HepG2 (cell line): ENCODE measurements at regions of chr11 and their contacts with region 1.

Region 1: GRCh38 chr11:6481012-6481923 is at the starts of genes ARFIP2 and TIMM10B:
- DNase-seq: peak; percentile 96
- ATAC-seq: peak; percentile 96
- H3K4me3 ChIP-seq: peak within 1 kb of the TSS; percentile 86 to 92 (median 86)
- H3K27ac ChIP-seq: peak within 1 kb of the TSS; percentile 95
- H3K4me1 ChIP-seq: peaks cover 56% of the 10 kb centered on the region
- H3K27me3 ChIP-seq: no peaks in the 10 kb centered on the region; a peak in 1 of 5 replicates
- CTCF ChIP-seq: no peak; the same call in 1 of the 2 replicates
- EP300 ChIP-seq: peak in 1 of 2 experiments; percentile 43; a peak in 1 of 4 replicates
- POLR2A ChIP-seq: peak; percentile 94 to 98
- RAD21 ChIP-seq: 0 out of 2 replicates have a peak, but pooled peaks have one; percentile 9
- total RNA-seq, gene ARFIP2: 58.9 and 60.2 TPM in 2 replicates
- total RNA-seq, gene TIMM10B: 39.5 and 60.1 TPM in 2 replicates

Region 2: GRCh38 chr11:6234387-6235107 is 246.7 kb before region 1 on chr11 and contains the start of gene FHIP1B:
- CTCF ChIA-PET with region 1: no interaction called
- POLR2A ChIA-PET with region 1: no interaction called
- in situ Hi-C with region 1: no loop called
- intact Hi-C with region 1: loop called (anchors 10 kb)
- DNase-seq: peak; percentile 99
- ATAC-seq: peak; percentile 93
- H3K4me3 ChIP-seq: peak within 1 kb of the TSS; percentile 68 to 91 (median 82)
- H3K27ac ChIP-seq: peak within 1 kb of the TSS; percentile 57
- H3K4me1 ChIP-seq: peaks cover 28% of the 10 kb centered on the region
- H3K27me3 ChIP-seq: peaks cover 0 to 4% of the 10 kb centered on the region in 2 experiments; a peak in 1 of 5 replicates
- CTCF ChIP-seq: peak; percentile 4; the same call in 1 of the 2 replicates
- EP300 ChIP-seq: no peak
- POLR2A ChIP-seq: peak in 1 of 2 experiments; percentile 85; a peak in 3 of 4 replicates
- RAD21 ChIP-seq: no peak
- total RNA-seq, gene FHIP1B: 10.8 and 14.1 TPM in 2 replicates

Region 3: GRCh38 chr11:6307876-6308275 is 173.4 kb before region 1 on chr11:
- CTCF ChIA-PET with region 1: no interaction called
- POLR2A ChIA-PET with region 1: no interaction called
- in situ Hi-C with region 1: no loop called
- intact Hi-C with region 1: no loop called
- DNase-seq: no peak
- ATAC-seq: no peak
- H3K4me3 ChIP-seq: no peak overlapping the region
- H3K27ac ChIP-seq: no peak overlapping the region
- H3K4me1 ChIP-seq: no peaks in the 10 kb centered on the region
- H3K27me3 ChIP-seq: peaks cover 0 to 11% of the 10 kb centered on the region in 2 experiments; a peak in 2 of 5 replicates
- CTCF ChIP-seq: no peak
- EP300 ChIP-seq: no peak
- POLR2A ChIP-seq: no peak
- RAD21 ChIP-seq: no peak

Region 4: GRCh38 chr11:6505577-6506240 is 24.4 kb after region 1 on chr11:
- CTCF ChIA-PET with region 1: no interaction called
- POLR2A ChIA-PET with region 1: no interaction called
- in situ Hi-C with region 1: no loop called
- intact Hi-C with region 1: loop called (anchors 2 kb)
- DNase-seq: peak; percentile 25
- ATAC-seq: peak; percentile 78
- H3K4me3 ChIP-seq: no peak overlapping the region
- H3K27ac ChIP-seq: no peak overlapping the region
- H3K4me1 ChIP-seq: no peaks in the 10 kb centered on the region
- H3K27me3 ChIP-seq: no peaks in the 10 kb centered on the region; a peak in 1 of 5 replicates
- CTCF ChIP-seq: peak; percentile 75
- EP300 ChIP-seq: no peak
- POLR2A ChIP-seq: no peak
- RAD21 ChIP-seq: 0 out of 2 replicates have a peak, but pooled peaks have one; percentile 36

Region 5: DNA sequence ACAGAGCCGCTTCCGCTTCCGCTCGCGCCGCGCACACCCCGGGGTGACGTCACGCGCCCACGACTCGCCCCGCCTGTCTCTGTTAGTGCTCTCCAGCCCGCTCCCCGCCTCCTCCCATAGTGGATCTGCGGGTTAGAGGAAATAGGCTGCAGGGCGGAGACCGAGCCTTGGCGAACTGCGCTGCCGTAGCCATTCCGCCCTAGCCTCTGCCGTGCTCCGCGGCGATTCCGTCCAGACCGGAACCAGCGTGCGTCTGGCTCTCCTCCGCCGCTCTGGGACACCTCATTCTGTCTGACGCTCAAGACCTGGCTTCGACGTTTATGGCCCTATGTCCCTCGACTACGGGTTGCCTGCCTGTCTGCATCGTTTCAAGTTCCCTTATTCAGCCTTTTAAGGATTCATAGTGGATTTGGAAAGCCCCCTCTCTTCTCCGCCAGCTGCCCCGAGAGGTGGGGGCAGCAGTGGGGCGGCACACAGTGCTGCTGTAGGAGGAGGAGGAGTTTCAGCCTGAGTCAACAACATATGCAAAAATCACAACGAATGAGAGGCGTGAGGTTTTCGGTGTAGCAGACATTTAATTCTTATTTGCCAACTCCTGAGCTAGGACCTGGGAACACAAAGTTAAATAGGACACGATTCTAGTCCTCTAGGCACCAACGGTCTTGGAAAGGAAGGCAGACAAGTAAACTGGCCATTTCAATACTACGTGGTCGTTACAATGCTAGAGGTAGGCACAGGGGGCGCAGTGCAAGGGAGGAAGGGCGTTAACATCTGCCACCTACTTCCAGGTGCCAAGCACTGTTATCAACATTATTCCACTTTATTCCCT is 131.2 kb after region 1 on chr11 and contains the start of gene TAF10:
- CTCF ChIA-PET with region 1: no interaction called
- POLR2A ChIA-PET with region 1: interaction called, 8 read pairs
- in situ Hi-C with region 1: loop called (anchors 10 kb)
- intact Hi-C with region 1: loop called (anchors 5 kb)
- DNase-seq: peak; percentile 87
- ATAC-seq: peak; percentile 92
- H3K4me3 ChIP-seq: peak within 1 kb of the TSS; percentile 81 to 93 (median 86)
- H3K27ac ChIP-seq: peak within 1 kb of the TSS; percentile 93
- H3K4me1 ChIP-seq: peaks cover 36% of the 10 kb centered on the region
- H3K27me3 ChIP-seq: no peaks in the 10 kb centered on the region
- CTCF ChIP-seq: peak; percentile 70
- EP300 ChIP-seq: no peak
- POLR2A ChIP-seq: peak; percentile 85 to 99
- RAD21 ChIP-seq: no peak
- total RNA-seq, gene TAF10: 51.0 and 71.3 TPM in 2 replicates